Calu3 (cell line): ENCODE measurements at regions of chr11 and their contacts with region 1.

Region 1: DNA sequence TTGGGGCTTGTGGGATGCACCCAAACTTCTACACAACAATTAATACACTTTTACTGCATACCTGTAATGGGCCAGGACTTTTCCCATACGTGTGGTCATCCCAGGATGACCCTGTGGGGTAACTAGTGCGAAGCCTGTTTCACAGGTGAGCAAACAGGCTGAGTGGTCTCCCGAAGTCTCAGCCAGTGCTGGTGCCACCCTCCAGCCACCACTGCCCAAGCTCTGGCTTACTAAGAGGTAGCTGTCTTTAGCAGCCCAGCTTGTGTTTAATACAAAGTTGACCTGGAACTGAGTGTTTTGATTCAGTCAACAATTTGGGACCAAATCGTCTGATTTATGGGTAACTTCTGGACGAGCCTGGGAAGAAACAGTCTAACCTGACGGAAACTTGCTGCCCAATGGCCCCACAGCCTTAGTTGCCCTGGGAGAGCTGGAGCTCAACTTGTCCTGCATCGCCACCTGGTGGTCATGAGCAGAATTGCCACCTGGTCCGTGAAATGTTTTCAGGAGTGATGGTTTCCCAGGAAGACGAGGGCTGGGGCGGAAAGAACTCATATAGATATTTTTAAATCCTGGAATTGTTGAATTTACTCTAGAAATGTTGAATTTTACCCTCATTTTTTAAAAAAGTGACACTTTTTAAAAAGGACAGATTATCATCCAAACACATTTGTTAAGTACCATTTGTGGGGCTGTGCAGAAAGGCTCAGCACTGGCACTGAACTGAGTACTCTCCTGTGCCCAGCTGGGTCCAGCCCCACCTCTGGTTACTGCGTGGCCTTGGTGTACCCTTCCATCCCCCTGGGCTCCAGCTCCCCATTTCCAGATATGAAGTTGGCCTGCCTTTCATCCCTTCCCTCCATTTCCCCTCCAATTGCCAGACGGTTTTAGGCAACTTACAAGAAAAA is 95.5 kb upstream of the PARVA start:
- DNase-seq: peak; percentile 82
- H3K4me3 Mint-ChIP-seq: no peak overlapping the region
- H3K27ac Mint-ChIP-seq: no peak overlapping the region
- H3K4me1 Mint-ChIP-seq: peaks cover 31% of the 10 kb centered on the region
- H3K27me3 Mint-ChIP-seq: no peaks in the 10 kb centered on the region
- CTCF ChIP-seq: peak; percentile 91

Region 2: GRCh38 chr11:11931461-11932055 is 350.3 kb before region 1 on chr11:
- CTCF ChIA-PET with region 1: no interaction called
- intact Hi-C with region 1: loop called (anchors 5 kb)
- DNase-seq: peak; percentile 20
- H3K4me3 Mint-ChIP-seq: no peak overlapping the region
- H3K27ac Mint-ChIP-seq: no peak overlapping the region
- H3K4me1 Mint-ChIP-seq: peaks cover 5% of the 10 kb centered on the region
- H3K27me3 Mint-ChIP-seq: no peaks in the 10 kb centered on the region
- CTCF ChIP-seq: peak; percentile 52

Region 3: GRCh38 chr11:12248338-12248737 is 33.5 kb before region 1 on chr11:
- CTCF ChIA-PET with region 1: no interaction called
- intact Hi-C with region 1: loop called (anchors 5 kb)
- DNase-seq: peak; percentile 94
- H3K4me3 Mint-ChIP-seq: peak overlapping the region; percentile 56
- H3K27ac Mint-ChIP-seq: peak overlapping the region; percentile 89
- H3K4me1 Mint-ChIP-seq: peaks cover 48% of the 10 kb centered on the region
- H3K27me3 Mint-ChIP-seq: no peaks in the 10 kb centered on the region
- CTCF ChIP-seq: no peak